Right lobe of liver (tissue), 6 donors: ENCODE measurements at regions of chr12 and their contacts with region 1.

Region 1: GRCh38 chr12:55797068-55797467 is 20.5 kb downstream of the SARNP start:
- DNase-seq: no peak
- ATAC-seq: peak; percentile 57 to 67 (median 62)
- H3K4me3 ChIP-seq: no peak overlapping the region
- H3K27ac ChIP-seq: no peak overlapping the region
- H3K4me1 ChIP-seq: no peaks in the 10 kb centered on the region
- H3K27me3 ChIP-seq: no peaks in the 10 kb centered on the region
- CTCF ChIP-seq: peak; percentile 35 to 60 (median 45)
- POLR2A ChIP-seq: no peak

Region 2: GRCh38 chr12:55743116-55743921 is 53.7 kb before region 1 on chr12 and contains the start of gene GDF11:
- intact Hi-C with region 1: loop called in 1 of 2 experiments (anchors 10 kb)
- DNase-seq: peak in 1 of 3 donors; percentile 49
- ATAC-seq: peak; percentile 19 to 39 (median 28)
- H3K4me3 ChIP-seq: peak within 1 kb of the TSS; percentile 32 to 52 (median 48)
- H3K27ac ChIP-seq: peak within 1 kb of the TSS in 1 of 3 donors; percentile 26
- H3K4me1 ChIP-seq: peaks cover 0 to 12% (median 0%) of the 10 kb centered on the region in 4 donors
- H3K27me3 ChIP-seq: no peaks in the 10 kb centered on the region
- CTCF ChIP-seq: no peak
- POLR2A ChIP-seq: no peak
- total RNA-seq, gene GDF11: 0.25 to 0.95 (median 0.54) TPM